GM12878 (cell line): ENCODE measurements at regions of chr12 and their contacts with region 1.

Region 1: DNA sequence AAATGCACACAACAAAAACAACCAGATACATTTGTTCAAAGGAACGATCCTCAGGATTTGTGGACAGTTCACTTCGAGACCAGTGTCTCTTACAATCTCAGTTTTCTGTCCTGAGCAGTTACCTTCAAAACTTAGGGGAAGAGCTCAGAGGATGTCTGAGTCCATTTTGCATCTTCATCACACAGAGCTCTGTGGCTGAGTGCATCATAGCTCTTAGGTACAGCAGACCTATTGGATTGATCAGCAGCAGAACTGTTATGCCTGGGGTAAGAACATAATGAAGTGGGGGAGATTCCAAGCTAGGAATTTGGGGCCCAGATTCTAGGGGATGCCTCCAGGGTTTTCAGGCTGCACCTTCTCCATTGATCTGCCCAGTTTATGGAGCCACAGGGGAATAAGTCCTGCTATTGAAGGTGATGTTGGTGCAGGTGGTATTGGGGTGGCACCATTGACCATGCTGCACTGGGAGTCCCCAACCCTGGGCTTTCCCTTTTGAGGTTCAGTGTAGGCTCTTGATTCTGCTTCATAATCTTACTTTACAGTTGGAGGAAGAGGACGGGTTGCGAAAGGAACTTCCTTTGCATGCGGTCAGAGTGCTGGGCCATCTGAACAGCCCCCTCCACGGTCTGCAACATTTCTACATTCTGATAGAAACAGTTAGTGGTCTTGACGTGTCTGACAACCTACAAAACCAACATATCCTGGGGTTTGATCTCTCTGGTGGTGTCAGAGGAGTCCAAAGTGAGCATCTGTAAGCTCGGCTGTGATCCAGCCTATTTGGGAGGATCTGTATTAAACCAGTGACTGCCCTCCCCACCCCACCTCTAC is 112.8 kb downstream of the CHST11 start:
- DNase-seq: peak; percentile 88
- ATAC-seq: peak; percentile 83
- H3K4me3 ChIP-seq: peak overlapping the region; percentile 67
- H3K27ac ChIP-seq: peak overlapping the region; percentile 95
- H3K4me1 ChIP-seq: peaks cover 43% of the 10 kb centered on the region
- H3K27me3 ChIP-seq: no peaks in the 10 kb centered on the region
- CTCF ChIP-seq: no peak
- EP300 ChIP-seq: peak; percentile 46 to 77; a peak in 1 of 4 replicates
- POLR2A ChIP-seq: peak; percentile 48; the same call in 1 of the 2 replicates
- RAD21 ChIP-seq: peak; percentile 20; the same call in 1 of the 2 replicates

Region 2: GRCh38 chr12:104201238-104202001 is 368.1 kb before region 1 on chr12:
- CTCF ChIA-PET with region 1: no interaction called
- POLR2A ChIA-PET with region 1: no interaction called
- RAD21 ChIA-PET with region 1: no interaction called
- SMC1A ChIA-PET with region 1: no interaction called
- in situ Hi-C with region 1: no loop called
- intact Hi-C with region 1: no loop called
- DNase-seq: peak; percentile 35
- ATAC-seq: peak; percentile 90
- H3K4me3 ChIP-seq: no peak overlapping the region
- H3K27ac ChIP-seq: no peak overlapping the region
- H3K4me1 ChIP-seq: no peaks in the 10 kb centered on the region
- H3K27me3 ChIP-seq: no peaks in the 10 kb centered on the region
- CTCF ChIP-seq: peak; percentile 80 to 83 (median 83)
- EP300 ChIP-seq: no peak
- POLR2A ChIP-seq: no peak
- RAD21 ChIP-seq: peak; percentile 95

Region 3: DNA sequence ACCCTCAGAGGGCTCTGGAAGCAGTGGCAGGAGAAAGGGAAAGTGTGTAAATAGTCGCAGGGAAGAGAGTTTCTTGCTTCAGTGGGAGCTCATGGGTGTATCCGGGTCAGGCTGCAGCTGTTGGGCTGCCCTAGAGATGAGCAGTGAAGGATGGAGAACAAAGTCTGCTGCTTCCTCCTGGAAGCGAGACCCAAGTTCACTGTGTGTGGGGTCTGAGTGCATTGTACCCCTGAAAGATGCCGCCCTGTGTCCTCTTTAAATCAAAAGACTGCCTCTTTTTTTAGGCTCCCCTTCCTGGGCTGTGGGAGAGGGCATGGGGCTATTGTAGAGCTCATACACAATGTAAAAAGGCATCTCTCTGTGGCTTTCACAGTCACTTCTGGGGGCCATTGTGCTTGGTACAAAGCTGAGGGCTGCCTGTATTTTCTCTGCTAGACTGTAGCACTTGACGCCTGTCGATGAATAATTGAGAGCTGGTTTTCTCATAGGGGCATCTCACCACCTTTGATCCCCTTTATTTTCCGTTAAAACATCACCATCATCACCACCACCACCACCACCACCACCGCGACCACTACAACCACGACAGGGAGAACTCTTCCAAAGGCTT is 96.1 kb before region 1 on chr12:
- CTCF ChIA-PET with region 1: interaction called, 12 read pairs
- POLR2A ChIA-PET with region 1: interaction called, 17 read pairs
- RAD21 ChIA-PET with region 1: interaction called, 21 read pairs
- SMC1A ChIA-PET with region 1: interaction called, 29 read pairs
- in situ Hi-C with region 1: no loop called
- intact Hi-C with region 1: loop called (anchors 5 kb)
- DNase-seq: no peak
- ATAC-seq: peak; percentile 76
- H3K4me3 ChIP-seq: peak overlapping the region; percentile 48
- H3K27ac ChIP-seq: peak overlapping the region; percentile 66
- H3K4me1 ChIP-seq: peaks cover 45% of the 10 kb centered on the region
- H3K27me3 ChIP-seq: no peaks in the 10 kb centered on the region
- CTCF ChIP-seq: no peak
- EP300 ChIP-seq: no peak
- POLR2A ChIP-seq: peak; percentile 54; the same call in 1 of the 2 replicates
- RAD21 ChIP-seq: no peak

Region 4: DNA sequence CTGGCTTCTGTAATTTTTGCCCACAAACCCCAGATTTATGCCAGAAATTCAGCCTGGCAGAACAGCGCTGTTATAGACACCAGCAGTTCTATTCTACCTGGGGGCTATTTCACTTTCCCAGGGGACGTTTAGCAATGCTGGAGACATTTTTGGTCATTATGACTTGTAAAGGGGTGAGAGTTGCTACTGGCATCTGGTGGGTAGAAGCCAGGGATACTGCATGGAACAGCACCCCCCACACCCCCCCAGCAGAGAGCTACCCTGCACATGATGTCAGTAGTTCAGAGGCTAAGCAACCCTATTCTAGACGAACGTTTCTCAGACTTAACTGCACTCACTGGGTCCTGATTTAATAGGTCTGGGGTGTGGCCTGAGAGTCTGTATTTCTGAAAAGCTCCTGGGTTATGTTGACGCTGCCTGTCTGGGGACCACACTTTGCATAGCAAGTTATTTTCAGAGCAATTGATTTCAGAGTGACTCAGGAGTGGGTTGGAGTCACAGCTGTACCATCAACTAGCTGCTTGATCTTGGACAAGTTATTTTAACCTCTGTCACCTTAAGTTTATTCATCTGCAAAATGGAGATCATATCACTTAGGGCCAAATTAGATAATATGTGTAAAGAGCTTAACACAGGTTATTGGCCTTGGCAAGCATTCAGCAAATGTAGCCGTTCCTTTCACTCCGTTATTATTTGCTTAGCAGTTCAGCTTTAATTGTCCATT is 64.3 kb before region 1 on chr12:
- CTCF ChIA-PET with region 1: interaction called, 9 read pairs
- POLR2A ChIA-PET with region 1: no interaction called
- RAD21 ChIA-PET with region 1: interaction called, 6 read pairs
- SMC1A ChIA-PET with region 1: interaction called, 20 read pairs
- in situ Hi-C with region 1: no loop called
- intact Hi-C with region 1: no loop called
- DNase-seq: peak; percentile 64
- ATAC-seq: peak; percentile 88
- H3K4me3 ChIP-seq: peak overlapping the region; percentile 37; the same call in 1 of the 2 replicates
- H3K27ac ChIP-seq: peak overlapping the region; percentile 43; the same call in 1 of the 2 replicates
- H3K4me1 ChIP-seq: peaks cover 43% of the 10 kb centered on the region
- H3K27me3 ChIP-seq: no peaks in the 10 kb centered on the region
- CTCF ChIP-seq: no peak
- EP300 ChIP-seq: no peak
- POLR2A ChIP-seq: no peak
- RAD21 ChIP-seq: no peak

Region 5: DNA sequence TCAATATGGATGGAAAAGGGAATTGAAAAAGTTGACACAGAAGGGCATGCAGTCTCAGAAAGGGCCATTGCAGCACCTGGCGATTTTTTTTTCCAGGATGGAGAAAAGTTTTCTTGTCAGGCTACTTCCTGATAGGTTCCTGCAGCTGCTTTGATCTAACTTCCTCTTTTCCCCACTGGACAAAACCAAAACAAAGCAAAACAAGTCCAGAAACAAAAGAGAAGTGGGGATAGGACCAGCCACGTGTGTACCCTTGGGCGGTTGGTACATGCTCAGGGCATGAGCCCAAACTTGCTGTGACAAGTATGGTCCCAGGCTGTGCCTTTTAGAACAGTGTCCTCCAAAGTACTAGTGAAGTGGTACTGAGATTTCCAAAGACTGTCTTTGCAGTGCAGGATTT is 23.0 kb before region 1 on chr12:
- CTCF ChIA-PET with region 1: interaction called, 4 read pairs
- POLR2A ChIA-PET with region 1: interaction called, 6 read pairs
- RAD21 ChIA-PET with region 1: interaction called, 7 read pairs
- SMC1A ChIA-PET with region 1: interaction called, 49 read pairs
- in situ Hi-C with region 1: no loop called
- intact Hi-C with region 1: no loop called
- DNase-seq: no peak
- ATAC-seq: peak; percentile 51
- H3K4me3 ChIP-seq: no peak overlapping the region
- H3K27ac ChIP-seq: 0 out of 2 replicates have a peak overlapping the region, but pooled peaks have one; percentile 8
- H3K4me1 ChIP-seq: peaks cover 10% of the 10 kb centered on the region
- H3K27me3 ChIP-seq: no peaks in the 10 kb centered on the region
- CTCF ChIP-seq: no peak
- EP300 ChIP-seq: no peak
- POLR2A ChIP-seq: no peak
- RAD21 ChIP-seq: no peak

Region 6: DNA sequence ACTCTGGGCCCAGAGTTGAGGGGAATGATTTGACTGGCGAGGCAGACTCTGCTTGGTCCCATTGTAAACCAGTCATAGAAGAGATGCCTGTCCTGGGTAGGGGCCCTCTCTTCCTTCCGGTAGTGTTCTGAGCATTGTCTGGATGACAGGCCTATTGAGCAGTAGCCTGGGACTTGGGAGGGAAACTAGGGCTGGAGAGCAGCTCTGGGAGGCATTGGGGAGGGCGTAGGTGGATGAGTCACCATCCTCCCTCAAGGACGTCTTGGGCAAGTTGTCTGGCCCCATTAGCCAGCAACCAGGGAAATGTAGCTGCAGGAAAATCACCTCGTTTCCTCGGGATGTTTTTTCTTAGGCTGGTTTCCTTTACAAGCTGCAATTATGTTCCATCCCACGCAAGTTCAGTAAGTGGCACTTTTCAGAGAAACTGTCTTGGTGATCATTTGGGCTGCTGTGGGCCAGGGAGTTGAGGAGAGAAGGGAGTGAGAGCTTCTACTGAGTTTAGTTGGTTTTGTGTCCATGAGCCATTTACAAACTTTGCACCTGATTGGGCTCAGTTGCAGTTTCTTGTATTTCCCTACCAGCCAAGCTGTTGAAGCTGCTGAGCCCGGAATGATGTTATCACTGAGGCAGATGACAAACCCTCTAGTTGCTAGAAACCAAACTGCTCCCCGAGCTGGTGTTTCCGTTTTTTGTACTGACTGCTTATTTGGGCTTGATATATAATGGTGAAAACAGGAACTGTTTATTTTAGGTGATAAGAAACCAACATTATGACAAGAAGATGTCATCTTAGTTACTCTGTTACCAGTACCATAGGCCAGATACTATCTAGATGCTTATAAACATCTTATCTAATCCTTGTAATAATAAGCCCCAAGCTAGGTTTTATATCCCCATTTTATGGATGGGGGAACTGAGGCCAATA is 34.8 kb after region 1 on chr12:
- CTCF ChIA-PET with region 1: interaction called, 5 read pairs
- POLR2A ChIA-PET with region 1: interaction called, 3 read pairs
- RAD21 ChIA-PET with region 1: interaction called, 12 read pairs
- SMC1A ChIA-PET with region 1: interaction called, 18 read pairs
- in situ Hi-C with region 1: no loop called
- intact Hi-C with region 1: loop called (anchors 2 kb)
- DNase-seq: peak; percentile 86
- ATAC-seq: peak; percentile 90
- H3K4me3 ChIP-seq: no peak overlapping the region
- H3K27ac ChIP-seq: peak overlapping the region; percentile 87
- H3K4me1 ChIP-seq: peaks cover 34% of the 10 kb centered on the region
- H3K27me3 ChIP-seq: no peaks in the 10 kb centered on the region
- CTCF ChIP-seq: 0 out of 6 replicates have a peak, but pooled peaks of 1 of the 3 experiments have one; percentile 4
- EP300 ChIP-seq: peak; percentile 36 to 60; a peak in 1 of 4 replicates
- POLR2A ChIP-seq: no peak
- RAD21 ChIP-seq: peak; percentile 32

Region 7: DNA sequence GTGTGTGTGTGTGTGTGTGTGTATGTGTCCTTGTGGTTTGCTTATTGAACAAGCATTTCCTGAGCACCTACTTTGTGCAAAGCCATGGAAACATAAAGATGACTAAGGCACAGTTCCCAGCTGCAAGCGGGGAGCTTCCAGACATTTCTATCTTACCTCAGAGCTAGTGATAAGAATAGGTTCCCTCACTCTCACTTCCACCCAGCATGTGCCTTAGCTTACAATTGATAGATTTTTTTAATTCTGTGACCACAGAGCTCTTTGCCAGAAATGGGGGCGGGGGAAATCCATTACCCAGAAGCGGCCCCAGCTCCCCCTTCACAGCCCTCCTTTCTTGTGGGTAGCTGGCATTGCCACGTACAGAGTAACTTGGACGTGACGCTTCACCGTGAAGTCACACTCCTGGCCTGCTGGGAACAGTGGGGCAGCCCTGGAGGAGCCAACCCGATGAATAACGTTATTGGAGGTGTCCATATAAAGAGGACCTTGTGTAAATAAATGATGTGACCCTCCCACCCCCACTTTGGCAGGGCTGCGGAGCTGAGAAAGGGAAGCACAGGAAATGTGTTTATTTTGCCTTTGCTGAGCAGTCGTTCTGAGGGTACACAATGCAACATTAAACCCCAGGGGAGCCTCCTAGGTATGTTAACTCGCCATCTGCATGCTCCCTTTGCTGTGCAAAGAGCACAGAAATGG is 126.0 kb after region 1 on chr12:
- CTCF ChIA-PET with region 1: interaction called, 4 read pairs
- POLR2A ChIA-PET with region 1: no interaction called
- RAD21 ChIA-PET with region 1: no interaction called
- SMC1A ChIA-PET with region 1: interaction called, 11 read pairs
- in situ Hi-C with region 1: no loop called
- intact Hi-C with region 1: no loop called
- DNase-seq: peak; percentile 73
- ATAC-seq: peak; percentile 75
- H3K4me3 ChIP-seq: no peak overlapping the region
- H3K27ac ChIP-seq: peak overlapping the region; percentile 58
- H3K4me1 ChIP-seq: peaks cover 42% of the 10 kb centered on the region
- H3K27me3 ChIP-seq: no peaks in the 10 kb centered on the region
- CTCF ChIP-seq: no peak
- EP300 ChIP-seq: peak; percentile 76 to 78; a peak in 3 of 4 replicates
- POLR2A ChIP-seq: no peak
- RAD21 ChIP-seq: no peak

Region 8: DNA sequence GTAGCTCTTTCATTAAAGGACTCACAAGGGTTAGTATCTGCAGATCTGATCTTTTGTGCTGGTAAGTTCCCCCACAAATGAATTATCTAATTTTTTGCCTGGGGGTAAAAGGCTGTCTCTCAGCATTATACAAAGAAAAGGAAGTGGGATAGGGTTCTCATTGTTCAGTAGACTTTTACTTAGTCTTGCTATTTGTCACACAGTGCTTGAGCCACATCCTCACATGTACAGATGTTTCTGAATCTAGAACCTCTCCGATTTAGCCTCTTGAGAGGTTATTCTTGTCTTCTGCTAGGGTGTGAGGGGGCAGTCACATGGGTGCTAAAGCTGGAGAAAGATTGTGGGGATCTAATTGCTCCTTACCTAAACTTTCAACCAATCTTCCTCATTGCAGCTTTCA is 295.5 kb after region 1 on chr12:
- CTCF ChIA-PET with region 1: no interaction called
- POLR2A ChIA-PET with region 1: no interaction called
- RAD21 ChIA-PET with region 1: no interaction called
- SMC1A ChIA-PET with region 1: no interaction called
- in situ Hi-C with region 1: no loop called
- intact Hi-C with region 1: no loop called
- DNase-seq: peak; percentile 45
- ATAC-seq: peak; percentile 93
- H3K4me3 ChIP-seq: no peak overlapping the region
- H3K27ac ChIP-seq: peak overlapping the region; percentile 37; the same call in 1 of the 2 replicates
- H3K4me1 ChIP-seq: peaks cover 14% of the 10 kb centered on the region
- H3K27me3 ChIP-seq: no peaks in the 10 kb centered on the region
- CTCF ChIP-seq: no peak
- EP300 ChIP-seq: peak in 1 of 2 experiments; percentile 48; a peak in 1 of 4 replicates
- POLR2A ChIP-seq: no peak
- RAD21 ChIP-seq: no peak